GM12878 (cell line): ENCODE measurements at regions of chr18 and their contacts with region 1.

Region 1: DNA sequence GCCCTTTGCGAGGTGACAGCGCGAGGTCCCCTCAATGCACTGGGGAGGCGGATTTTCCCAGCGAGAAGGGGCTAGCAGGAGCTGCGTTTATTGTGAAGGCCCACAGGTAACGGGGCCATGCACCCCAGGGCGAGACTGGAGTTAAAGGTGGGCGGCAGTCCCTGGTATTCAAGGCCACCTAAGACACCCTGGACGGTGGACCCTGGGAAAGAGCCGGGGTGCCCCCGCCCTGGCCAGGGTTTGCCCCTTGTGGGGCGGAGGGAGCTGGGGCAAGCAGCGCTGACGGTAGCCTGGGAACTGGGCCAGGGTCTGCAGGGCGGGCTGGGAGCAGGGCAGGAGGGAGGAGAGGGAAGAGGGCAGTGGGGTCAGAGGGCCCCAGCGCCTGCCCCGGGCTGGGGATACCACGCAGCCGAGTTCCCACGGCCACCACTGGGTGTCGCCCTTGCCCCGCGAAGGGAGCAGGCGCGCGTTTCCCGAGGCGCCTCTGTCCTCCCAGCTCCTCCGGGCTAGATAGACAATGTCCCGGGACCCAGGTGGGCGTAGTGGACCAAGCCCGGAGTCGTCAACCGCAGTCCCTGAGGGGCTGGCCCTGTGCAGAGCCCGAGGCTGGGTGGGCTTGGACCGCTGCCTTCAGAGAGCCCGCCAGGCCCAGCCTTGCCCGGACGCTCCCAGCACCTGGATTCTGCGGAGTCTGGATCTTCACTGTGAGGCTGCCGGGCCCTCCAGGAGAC is 80.2 kb downstream of the SMAD4 start:
- DNase-seq: no peak
- ATAC-seq: peak; percentile 99
- H3K4me3 ChIP-seq: no peak overlapping the region
- H3K27ac ChIP-seq: no peak overlapping the region
- H3K4me1 ChIP-seq: peaks cover 8% of the 10 kb centered on the region; the same call in 1 of the 2 replicates
- H3K27me3 ChIP-seq: no peaks in the 10 kb centered on the region
- CTCF ChIP-seq: peak; percentile 79 to 98 (median 96)
- EP300 ChIP-seq: no peak
- POLR2A ChIP-seq: no peak
- RAD21 ChIP-seq: peak; percentile 94

Region 2: DNA sequence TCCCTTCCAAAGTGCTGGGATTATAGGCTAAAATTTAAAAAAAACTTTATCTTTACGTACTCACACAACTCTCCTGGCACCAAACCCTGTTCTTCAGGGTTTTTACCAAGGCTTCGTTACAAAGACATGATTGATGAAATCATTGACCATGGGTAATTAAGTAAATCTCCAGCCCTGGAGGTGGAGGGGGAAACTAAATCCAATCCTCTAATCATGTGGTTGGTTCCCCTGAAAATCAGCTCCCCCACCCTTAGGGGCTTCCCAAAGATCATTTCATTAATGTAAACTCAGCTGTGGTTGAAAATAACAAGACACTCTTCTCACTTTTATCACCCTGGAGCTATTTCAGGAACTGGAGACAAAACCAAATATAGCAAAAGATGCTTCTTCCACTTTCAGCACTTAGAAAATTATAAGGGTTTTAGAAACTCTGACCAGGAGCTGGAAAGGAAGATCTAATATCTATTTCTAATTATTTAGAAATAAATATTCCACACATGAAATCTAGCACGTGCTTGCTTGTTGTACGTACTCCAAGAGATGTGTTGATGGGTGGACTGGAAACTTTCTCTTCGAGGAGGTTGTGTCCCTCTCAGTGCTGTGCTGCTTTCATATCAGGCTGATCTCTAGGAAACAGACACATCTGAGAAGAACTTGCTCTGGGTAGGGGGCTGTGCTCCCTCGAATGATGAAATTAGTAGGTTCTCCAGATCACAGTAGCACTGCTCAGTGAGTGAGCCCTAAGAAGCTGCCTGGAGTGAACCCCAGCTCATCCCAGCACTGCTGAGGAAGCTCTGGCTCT is 13.0 kb before region 1 on chr18:
- CTCF ChIA-PET with region 1: interaction called, 13 read pairs
- POLR2A ChIA-PET with region 1: interaction called, 5 read pairs
- RAD21 ChIA-PET with region 1: interaction called, 9 read pairs
- SMC1A ChIA-PET with region 1: interaction called, 10 read pairs
- in situ Hi-C with region 1: no loop called
- intact Hi-C with region 1: no loop called
- DNase-seq: no peak
- ATAC-seq: peak; percentile 85
- H3K4me3 ChIP-seq: no peak overlapping the region
- H3K27ac ChIP-seq: peak overlapping the region; percentile 17
- H3K4me1 ChIP-seq: peaks cover 7% of the 10 kb centered on the region
- H3K27me3 ChIP-seq: no peaks in the 10 kb centered on the region
- CTCF ChIP-seq: no peak
- EP300 ChIP-seq: peak; percentile 44 to 51; a peak in 1 of 4 replicates
- POLR2A ChIP-seq: no peak
- RAD21 ChIP-seq: no peak

Region 3: DNA sequence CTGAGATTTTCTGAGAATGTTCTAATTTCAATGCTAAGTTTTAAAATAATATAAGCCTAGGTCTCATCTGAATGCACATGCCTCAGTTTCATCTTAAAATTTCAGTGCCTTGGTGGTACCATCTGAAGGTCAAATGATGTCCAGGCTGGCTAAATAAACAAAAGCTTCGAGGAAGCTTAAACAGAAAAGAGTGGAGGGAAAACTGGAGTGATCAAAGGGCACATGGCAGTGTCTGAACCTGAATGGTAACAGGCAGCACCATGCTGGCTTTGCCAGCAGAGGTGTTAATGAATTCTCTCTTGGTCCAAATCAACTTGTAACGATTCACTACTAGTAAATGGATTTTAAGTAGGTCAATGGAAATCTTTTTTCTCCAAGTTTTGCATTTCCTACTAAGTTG is 245.6 kb after region 1 on chr18:
- CTCF ChIA-PET with region 1: no interaction called
- POLR2A ChIA-PET with region 1: no interaction called
- RAD21 ChIA-PET with region 1: no interaction called
- SMC1A ChIA-PET with region 1: no interaction called
- in situ Hi-C with region 1: no loop called
- intact Hi-C with region 1: no loop called
- DNase-seq: no peak
- ATAC-seq: no peak
- H3K4me3 ChIP-seq: no peak overlapping the region
- H3K27ac ChIP-seq: no peak overlapping the region
- H3K4me1 ChIP-seq: no peaks in the 10 kb centered on the region
- H3K27me3 ChIP-seq: no peaks in the 10 kb centered on the region
- CTCF ChIP-seq: no peak
- EP300 ChIP-seq: no peak
- POLR2A ChIP-seq: no peak
- RAD21 ChIP-seq: no peak

Region 4: DNA sequence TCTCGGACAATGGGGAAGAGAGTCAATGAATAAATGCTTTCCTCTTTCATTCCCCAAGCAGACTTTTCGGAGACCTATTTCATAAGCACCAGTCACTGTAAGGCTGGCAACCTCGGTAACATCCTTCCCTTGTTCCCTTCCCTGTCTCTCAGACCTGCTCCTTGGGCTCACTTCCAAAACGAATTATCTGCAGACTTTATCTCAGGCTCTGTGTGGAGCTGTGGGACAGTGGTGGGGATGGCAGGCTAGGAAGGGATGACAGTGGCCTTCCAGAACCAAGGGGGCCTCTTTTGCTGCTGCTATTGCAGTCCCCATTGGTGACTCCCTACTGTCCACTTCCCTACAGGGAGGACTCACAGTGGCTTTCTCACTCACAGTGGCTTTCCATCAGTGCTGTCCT is 272.9 kb after region 1 on chr18:
- CTCF ChIA-PET with region 1: interaction called, 18 read pairs
- POLR2A ChIA-PET with region 1: no interaction called
- RAD21 ChIA-PET with region 1: interaction called, 17 read pairs
- SMC1A ChIA-PET with region 1: interaction called, 6 read pairs
- in situ Hi-C with region 1: loop called (anchors 25 kb)
- intact Hi-C with region 1: loop called (anchors 5 kb)
- DNase-seq: no peak
- ATAC-seq: no peak
- H3K4me3 ChIP-seq: no peak overlapping the region
- H3K27ac ChIP-seq: no peak overlapping the region
- H3K4me1 ChIP-seq: no peaks in the 10 kb centered on the region
- H3K27me3 ChIP-seq: no peaks in the 10 kb centered on the region; a peak in 2 of 4 replicates
- CTCF ChIP-seq: no peak
- EP300 ChIP-seq: no peak
- POLR2A ChIP-seq: no peak
- RAD21 ChIP-seq: no peak

Region 5: GRCh38 chr18:51614033-51614432 is 503.8 kb after region 1 on chr18:
- CTCF ChIA-PET with region 1: interaction called, 3 read pairs
- POLR2A ChIA-PET with region 1: no interaction called
- RAD21 ChIA-PET with region 1: no interaction called
- SMC1A ChIA-PET with region 1: no interaction called
- in situ Hi-C with region 1: loop called (anchors 5 kb)
- intact Hi-C with region 1: loop called (anchors 5 kb)
- DNase-seq: no peak
- ATAC-seq: no peak
- H3K4me3 ChIP-seq: no peak overlapping the region
- H3K27ac ChIP-seq: no peak overlapping the region
- H3K4me1 ChIP-seq: no peaks in the 10 kb centered on the region
- H3K27me3 ChIP-seq: no peaks in the 10 kb centered on the region
- CTCF ChIP-seq: no peak
- EP300 ChIP-seq: no peak
- POLR2A ChIP-seq: no peak
- RAD21 ChIP-seq: no peak

Region 6: GRCh38 chr18:52288403-52289004 is 1178.3 kb after region 1 on chr18:
- CTCF ChIA-PET with region 1: interaction called, 12 read pairs
- POLR2A ChIA-PET with region 1: no interaction called
- RAD21 ChIA-PET with region 1: interaction called, 10 read pairs
- SMC1A ChIA-PET with region 1: no interaction called
- in situ Hi-C with region 1: loop called (anchors 25 kb)
- intact Hi-C with region 1: no loop called
- DNase-seq: no peak
- ATAC-seq: peak; percentile 94
- H3K4me3 ChIP-seq: no peak overlapping the region
- H3K27ac ChIP-seq: no peak overlapping the region
- H3K4me1 ChIP-seq: no peaks in the 10 kb centered on the region
- H3K27me3 ChIP-seq: no peaks in the 10 kb centered on the region
- CTCF ChIP-seq: peak; percentile 88 to 93 (median 88)
- EP300 ChIP-seq: no peak
- POLR2A ChIP-seq: no peak
- RAD21 ChIP-seq: peak; percentile 92